Transverse colon (tissue), 4 donors: ENCODE measurements at regions of chr12 and their contacts with region 1.

Region 1: DNA sequence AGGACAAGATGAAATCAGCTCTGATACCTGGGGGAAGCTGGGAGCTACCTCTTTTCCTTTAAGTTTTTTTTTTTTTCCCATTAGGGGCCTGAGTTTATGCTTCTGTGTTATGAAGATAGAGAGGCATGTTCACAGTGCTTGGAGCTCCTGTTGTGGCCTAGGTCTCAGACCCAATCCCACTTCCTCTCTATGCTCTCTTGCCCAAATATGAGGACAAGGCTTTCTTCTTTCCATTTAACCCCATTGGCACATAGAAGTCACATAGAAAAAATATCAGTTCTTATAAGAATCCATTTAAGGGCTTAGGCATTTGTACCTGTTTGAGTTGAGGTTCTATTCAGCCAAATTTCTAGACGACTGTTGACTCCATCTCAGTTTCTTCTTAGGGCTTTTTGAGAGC is 12.6 kb downstream of the MRPS35 start:
- DNase-seq: no peak
- H3K4me3 ChIP-seq: no peak overlapping the region
- H3K27ac ChIP-seq: no peak overlapping the region
- H3K4me1 ChIP-seq: no peaks in the 10 kb centered on the region
- H3K27me3 ChIP-seq: no peaks in the 10 kb centered on the region
- CTCF ChIP-seq: no peak
- EP300 ChIP-seq: no peak
- POLR2A ChIP-seq: no peak

Region 2: DNA sequence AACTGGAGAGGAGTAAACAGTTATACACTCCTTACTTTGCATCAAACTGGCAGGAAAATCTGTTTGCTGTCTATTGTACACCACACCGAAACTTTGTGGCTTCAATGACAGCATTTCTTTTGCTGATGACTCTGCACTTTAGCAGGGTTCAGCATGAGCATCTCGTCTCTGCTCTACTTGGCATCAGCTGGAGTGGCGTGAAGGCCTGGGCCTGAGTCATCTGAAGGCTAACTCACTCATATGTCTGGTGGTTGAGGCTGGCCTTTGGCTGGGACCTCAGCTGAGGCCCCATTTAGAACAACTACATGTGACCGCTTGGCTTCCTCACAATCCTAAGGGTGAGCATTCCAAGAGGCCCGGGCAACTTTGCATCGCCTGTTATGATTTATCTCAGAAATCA is 55.7 kb before region 1 on chr12:
- in situ Hi-C with region 1: no loop called
- intact Hi-C with region 1: no loop called
- DNase-seq: no peak
- H3K4me3 ChIP-seq: no peak overlapping the region
- H3K27ac ChIP-seq: no peak overlapping the region
- H3K4me1 ChIP-seq: no peaks in the 10 kb centered on the region
- H3K27me3 ChIP-seq: no peaks in the 10 kb centered on the region
- CTCF ChIP-seq: no peak
- EP300 ChIP-seq: no peak
- POLR2A ChIP-seq: no peak

Region 3: GRCh38 chr12:27940756-27941402 is 217.7 kb after region 1 on chr12:
- in situ Hi-C with region 1: loop called in 2 of 4 experiments (anchors 10 to 25 kb)
- intact Hi-C with region 1: no loop called
- DNase-seq: peak; percentile 76
- H3K4me3 ChIP-seq: no peak overlapping the region
- H3K27ac ChIP-seq: no peak overlapping the region
- H3K4me1 ChIP-seq: no peaks in the 10 kb centered on the region
- H3K27me3 ChIP-seq: no peaks in the 10 kb centered on the region
- CTCF ChIP-seq: peak; percentile 65 to 83 (median 72)
- EP300 ChIP-seq: no peak
- POLR2A ChIP-seq: no peak